PC-3 (cell line): ENCODE measurements at regions of chr2 and their contacts with region 1.

Region 1: DNA sequence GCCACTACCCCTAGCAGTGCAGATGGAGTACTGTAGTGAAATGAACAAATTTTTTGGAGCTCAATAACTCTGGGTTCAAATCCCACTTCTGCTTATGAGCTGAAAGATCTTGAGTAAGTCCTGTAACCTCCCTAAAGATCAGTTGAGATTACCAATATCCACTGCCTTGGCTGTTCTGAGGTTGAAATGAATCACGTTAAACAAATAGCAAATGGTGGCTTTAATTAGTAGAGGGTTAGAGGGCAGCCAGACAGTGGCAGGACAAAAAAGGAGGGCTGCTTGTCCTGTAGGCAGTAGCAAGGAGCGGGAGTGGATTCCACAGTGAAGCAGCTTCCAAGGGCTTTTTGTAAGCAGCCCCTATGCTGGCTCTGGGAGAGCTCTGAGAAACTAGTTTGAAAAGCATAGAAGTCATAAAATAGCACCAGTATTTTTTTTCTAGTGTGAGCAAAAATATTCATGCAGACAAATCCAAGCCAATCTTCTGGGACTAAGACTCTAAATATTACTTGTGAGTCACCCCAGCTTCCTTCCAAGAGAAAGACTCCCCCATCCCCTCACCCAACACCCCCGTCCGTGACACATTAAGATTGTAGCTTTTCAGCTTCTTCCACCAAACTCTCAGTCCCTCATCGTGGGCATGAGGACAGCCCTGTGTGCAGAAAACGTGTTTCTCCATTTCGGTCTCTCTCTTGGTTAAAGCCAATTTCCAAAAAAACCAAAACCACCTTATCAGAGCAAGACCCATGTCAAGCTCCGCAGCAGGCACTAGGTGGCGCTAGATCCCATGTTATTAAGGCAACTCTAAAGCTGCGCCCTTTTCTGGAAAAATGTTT is 123.5 kb upstream of the LGALSL start:
- DNase-seq: peak; percentile 87
- ATAC-seq: peak; percentile 49
- H3K4me3 ChIP-seq: peak overlapping the region; percentile 61
- H3K27ac ChIP-seq: no peak overlapping the region
- H3K4me1 ChIP-seq: peaks cover 32% of the 10 kb centered on the region
- H3K27me3 ChIP-seq: no peaks in the 10 kb centered on the region
- CTCF ChIP-seq: peak; percentile 96

Region 2: DNA sequence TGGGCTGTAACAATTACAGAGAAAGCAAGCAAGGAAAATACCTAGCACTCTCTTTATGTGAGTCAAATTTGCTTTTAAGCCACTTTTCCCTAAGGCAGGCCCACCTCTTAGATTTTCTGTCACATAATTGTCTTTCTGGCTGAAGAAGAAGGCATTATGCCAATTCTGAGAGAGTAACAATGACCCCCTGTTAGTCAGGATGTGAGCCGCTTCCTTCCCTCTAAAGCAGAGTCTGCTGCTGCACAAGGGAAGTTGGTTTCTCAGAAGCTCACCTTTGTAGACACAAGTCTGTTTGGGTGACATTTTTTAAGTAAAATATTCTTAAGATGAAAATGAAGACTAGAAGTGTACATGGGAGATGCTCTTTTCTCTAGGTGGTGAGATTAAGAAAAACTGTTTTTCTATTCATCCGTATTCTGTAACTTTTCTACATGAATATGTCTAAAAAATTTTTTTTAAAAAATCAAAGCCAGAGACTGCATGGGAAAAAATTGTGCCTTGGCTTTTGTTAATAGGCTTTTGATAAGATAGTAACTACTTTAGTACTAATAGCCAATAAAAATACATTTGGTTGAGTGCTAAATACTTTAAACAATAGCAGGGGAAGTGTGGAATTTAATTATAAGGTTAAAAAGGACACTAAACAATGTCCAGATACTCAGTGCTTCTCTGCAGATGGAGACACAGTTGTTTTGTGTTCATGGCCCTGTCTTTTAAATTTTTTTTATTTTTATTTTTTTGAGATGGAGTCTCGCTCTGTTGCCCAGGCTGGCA is 277.8 kb before region 1 on chr2:
- CTCF ChIA-PET with region 1: interaction called, 15 read pairs
- POLR2A ChIA-PET with region 1: no interaction called
- intact Hi-C with region 1: loop called (anchors 1 kb)
- DNase-seq: peak; percentile 59
- ATAC-seq: peak; percentile 11; the same call in 1 of the 2 replicates
- H3K4me3 ChIP-seq: no peak overlapping the region
- H3K27ac ChIP-seq: no peak overlapping the region
- H3K4me1 ChIP-seq: peaks cover 4% of the 10 kb centered on the region; the same call in 1 of the 2 replicates
- H3K27me3 ChIP-seq: no peaks in the 10 kb centered on the region
- CTCF ChIP-seq: no peak

Region 3: GRCh38 chr2:64402876-64403275 is 72.4 kb after region 1 on chr2:
- CTCF ChIA-PET with region 1: no interaction called
- POLR2A ChIA-PET with region 1: interaction called, 4 read pairs
- intact Hi-C with region 1: loop called (anchors 2 kb)
- DNase-seq: peak; percentile 57
- ATAC-seq: no peak
- H3K4me3 ChIP-seq: no peak overlapping the region
- H3K27ac ChIP-seq: no peak overlapping the region
- H3K4me1 ChIP-seq: peaks cover 66% of the 10 kb centered on the region
- H3K27me3 ChIP-seq: no peaks in the 10 kb centered on the region
- CTCF ChIP-seq: peak; percentile 34; the same call in 1 of the 2 replicates

Region 4: DNA sequence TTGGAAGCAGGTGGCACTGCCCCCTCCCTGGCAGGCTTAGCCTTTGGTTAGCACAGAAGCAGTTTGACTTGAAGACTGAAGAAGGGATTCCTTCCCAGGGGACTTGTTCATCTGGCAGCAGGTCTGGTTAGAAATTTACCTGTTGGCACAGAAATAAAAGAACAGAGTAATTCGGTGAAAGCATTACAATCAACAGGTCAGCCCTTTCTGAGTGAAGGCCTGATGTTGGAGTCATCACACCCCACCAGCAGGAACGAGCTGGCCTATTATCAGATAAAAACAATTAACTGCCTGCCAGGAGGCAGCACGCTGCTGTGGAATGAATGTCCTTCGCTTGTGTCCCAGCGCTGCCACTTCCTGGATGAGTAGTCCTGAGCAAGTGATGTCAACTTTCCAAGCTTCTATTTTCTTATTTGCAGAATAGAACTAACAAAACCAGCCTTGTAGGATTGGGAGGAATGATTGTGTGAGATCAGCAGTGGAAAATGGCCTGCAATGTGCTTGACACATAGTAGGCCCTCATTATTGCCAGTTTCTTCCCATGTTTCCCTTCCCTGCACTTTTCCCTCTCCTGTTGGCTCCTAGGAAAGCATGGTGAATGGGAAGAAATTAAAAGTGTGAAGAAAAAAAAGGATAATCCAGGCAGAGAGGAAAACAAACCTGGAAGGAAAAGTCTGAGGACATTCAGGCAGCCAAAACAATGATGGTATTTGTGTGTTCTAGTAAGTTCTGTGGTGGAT is 152.4 kb after region 1 on chr2:
- CTCF ChIA-PET with region 1: interaction called, 15 read pairs
- POLR2A ChIA-PET with region 1: interaction called, 6 read pairs
- intact Hi-C with region 1: loop called (anchors 1 kb)
- DNase-seq: peak; percentile 85
- ATAC-seq: peak; percentile 94
- H3K4me3 ChIP-seq: no peak overlapping the region
- H3K27ac ChIP-seq: peak overlapping the region; percentile 36
- H3K4me1 ChIP-seq: peaks cover 27% of the 10 kb centered on the region
- H3K27me3 ChIP-seq: no peaks in the 10 kb centered on the region
- CTCF ChIP-seq: no peak

Region 5: DNA sequence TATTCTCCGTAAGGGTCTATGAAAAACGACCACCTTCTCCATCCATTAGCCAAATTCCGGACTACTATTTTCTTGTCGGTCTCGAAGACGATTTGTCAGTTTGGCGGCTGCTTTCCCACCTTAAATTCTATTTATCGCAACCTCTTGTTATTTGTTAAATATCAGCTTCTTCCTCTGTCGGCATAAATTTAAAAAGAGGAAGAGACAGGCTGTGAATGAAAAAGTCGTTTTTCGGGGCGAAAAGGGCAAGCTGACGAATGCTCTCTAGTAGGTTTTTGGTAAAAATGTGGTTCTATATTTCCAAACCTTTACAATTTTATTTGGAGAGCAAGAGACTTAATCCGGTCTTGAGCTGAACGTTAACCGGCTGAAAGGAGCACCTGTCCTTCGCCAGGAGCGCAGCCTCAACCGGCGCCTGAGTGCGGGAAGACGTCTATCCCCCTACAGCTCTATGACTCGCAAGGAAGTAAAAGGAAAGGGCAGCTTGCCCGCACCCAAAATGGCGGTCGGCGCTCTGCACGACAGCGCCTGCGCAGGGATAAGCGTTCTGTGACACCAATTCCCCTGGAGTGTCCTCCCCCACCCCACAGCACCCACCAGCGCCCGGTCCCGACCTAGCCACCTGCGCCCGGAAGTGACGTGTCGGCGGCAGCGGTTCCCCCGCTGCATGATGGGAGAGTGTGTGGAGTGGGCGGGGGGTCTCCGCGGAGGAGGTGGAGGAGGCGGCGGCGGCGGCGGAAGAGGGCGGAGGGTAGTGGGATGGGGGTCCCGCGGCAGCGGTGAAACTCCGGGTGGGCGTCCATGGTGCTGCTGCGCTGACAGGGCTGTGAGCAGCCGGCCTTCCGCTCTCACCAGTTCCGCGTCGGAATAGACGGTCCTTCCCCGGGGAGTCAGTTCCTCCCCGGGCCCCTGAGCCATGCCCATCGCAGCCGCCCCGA is 193.4 kb after region 1 on chr2 and contains the start of gene AFTPH:
- CTCF ChIA-PET with region 1: interaction called, 10 read pairs
- POLR2A ChIA-PET with region 1: no interaction called
- intact Hi-C with region 1: no loop called
- DNase-seq: peak; percentile 99
- ATAC-seq: peak; percentile 91
- H3K4me3 ChIP-seq: peak within 1 kb of the TSS; percentile 76
- H3K27ac ChIP-seq: peak within 1 kb of the TSS; percentile 57
- H3K4me1 ChIP-seq: peaks cover 4% of the 10 kb centered on the region
- H3K27me3 ChIP-seq: no peaks in the 10 kb centered on the region
- CTCF ChIP-seq: no peak
- total RNA-seq, gene AFTPH: 18.9 and 26.6 TPM in 2 replicates

Region 6: DNA sequence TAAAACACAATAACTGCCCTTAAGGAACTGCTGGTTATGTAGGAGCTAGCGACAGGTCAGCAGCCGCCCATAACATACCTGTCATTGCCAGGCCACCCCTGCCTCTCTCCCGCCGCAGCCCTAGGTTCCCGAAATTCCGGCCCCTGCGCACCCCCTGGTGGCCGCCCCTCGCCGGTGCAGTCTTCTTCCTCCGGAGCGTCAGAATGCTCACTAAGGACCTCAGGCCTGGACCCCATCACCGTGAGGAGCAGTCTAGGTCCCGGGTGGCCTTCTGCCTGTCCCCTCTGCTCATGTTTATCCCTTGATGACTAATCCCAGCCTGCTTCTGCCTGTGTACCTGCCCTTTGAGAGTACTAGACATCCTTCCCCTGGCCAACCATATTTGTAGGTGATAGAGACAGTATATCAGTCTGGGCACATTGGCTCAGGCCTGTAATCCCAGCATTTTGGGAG is 543.0 kb after region 1 on chr2:
- CTCF ChIA-PET with region 1: no interaction called
- POLR2A ChIA-PET with region 1: no interaction called
- intact Hi-C with region 1: no loop called
- DNase-seq: peak; percentile 86
- ATAC-seq: peak; percentile 73
- H3K4me3 ChIP-seq: no peak overlapping the region
- H3K27ac ChIP-seq: no peak overlapping the region
- H3K4me1 ChIP-seq: peaks cover 21% of the 10 kb centered on the region
- H3K27me3 ChIP-seq: no peaks in the 10 kb centered on the region
- CTCF ChIP-seq: peak; percentile 96

Region 7: DNA sequence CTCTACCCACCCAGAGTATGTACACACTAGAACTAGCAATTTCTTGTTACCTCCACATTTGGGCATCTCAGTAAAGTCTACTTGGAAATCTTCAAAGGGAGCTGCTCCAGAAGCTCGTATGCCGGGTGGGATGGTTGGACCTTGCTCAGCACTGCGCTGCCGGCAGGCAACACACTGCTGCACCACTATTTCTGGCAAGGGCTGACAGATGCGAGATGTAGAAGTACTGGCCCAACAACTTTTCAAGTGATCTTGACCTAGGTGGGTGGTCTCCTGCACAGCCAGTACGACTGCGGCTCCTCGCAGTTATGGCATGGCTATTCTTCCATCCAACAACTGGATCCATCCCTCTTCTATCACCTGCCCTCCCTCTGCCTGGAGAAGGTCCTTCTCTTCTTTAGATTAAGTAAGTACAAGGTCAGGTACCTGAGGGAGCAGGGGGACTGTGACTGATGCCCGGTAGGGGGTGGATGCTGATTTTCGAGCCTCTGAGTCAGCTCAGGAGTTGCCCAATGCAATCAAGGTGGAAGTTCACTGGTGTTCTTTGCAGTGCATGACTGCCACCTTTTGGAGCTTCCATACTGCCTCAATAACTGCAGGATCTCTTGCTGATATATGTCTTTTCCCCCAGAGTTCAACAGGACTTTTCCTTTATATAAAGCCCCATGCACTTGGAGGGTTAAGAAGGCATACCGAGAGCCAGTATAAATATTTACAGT is 558.3 kb after region 1 on chr2:
- CTCF ChIA-PET with region 1: interaction called, 5 read pairs
- POLR2A ChIA-PET with region 1: no interaction called
- intact Hi-C with region 1: loop called (anchors 2 kb)
- DNase-seq: peak; percentile 96
- ATAC-seq: peak; percentile 98
- H3K4me3 ChIP-seq: no peak overlapping the region
- H3K27ac ChIP-seq: no peak overlapping the region
- H3K4me1 ChIP-seq: peaks cover 11% of the 10 kb centered on the region
- H3K27me3 ChIP-seq: no peaks in the 10 kb centered on the region
- CTCF ChIP-seq: peak; percentile 89